A673 (cell line): ENCODE measurements at regions of chr13 and their contacts with region 1.

Region 1: DNA sequence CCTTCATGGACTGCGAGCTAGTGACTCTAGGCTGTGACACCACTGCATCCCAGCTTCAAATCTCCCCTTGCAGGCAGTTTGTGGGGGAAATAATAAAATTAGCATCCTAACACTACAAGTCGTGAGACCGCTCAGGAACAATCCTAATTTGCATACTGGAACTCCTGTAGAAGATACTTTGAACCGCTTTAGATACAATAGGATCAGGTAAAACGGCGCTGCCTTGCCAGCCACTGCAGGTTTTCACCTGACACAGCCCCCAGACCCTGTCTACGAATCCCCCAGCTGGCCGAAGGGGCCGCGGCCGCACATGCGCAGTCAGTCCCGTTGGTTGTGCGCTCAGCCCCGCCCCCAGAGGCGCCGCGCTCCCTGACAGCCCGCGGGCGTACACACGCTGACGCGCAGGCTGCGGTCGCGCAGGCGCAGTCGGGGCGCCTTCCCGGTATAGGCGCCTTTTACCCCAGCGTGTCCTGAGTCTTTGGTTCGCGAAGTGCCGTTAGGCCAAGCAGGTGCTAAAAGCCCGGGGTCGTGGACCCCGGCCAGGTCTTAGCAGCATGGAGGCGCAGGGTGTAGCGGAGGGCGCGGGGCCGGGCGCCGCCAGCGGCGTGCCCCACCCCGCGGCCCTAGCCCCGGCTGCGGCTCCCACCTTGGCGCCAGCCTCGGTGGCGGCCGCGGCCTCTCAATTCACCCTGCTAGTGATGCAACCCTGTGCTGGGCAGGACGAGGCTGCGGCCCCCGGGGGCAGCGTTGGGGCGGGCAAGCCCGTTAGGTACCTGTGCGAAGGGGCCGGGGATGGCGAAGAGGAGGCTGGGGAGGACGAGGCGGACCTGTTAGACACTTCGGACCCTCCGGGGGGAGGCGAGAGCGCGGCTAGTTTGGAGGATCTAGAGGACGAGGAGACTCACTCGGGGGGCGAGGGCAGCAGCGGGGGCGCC is at the start of gene RFXAP:
- DNase-seq: peak; percentile 94
- H3K4me3 ChIP-seq: peak within 1 kb of the TSS; percentile 79
- H3K27ac ChIP-seq: peak within 1 kb of the TSS; percentile 89
- H3K4me1 ChIP-seq: peaks cover 31% of the 10 kb centered on the region
- H3K27me3 ChIP-seq: no peaks in the 10 kb centered on the region
- CTCF ChIP-seq: no peak
- total RNA-seq, gene RFXAP: 25.9 and 29.2 TPM in 2 replicates

Region 2: GRCh38 chr13:36571444-36571843 is 247.6 kb before region 1 on chr13:
- CTCF ChIA-PET with region 1: interaction called, 4 read pairs
- POLR2A ChIA-PET with region 1: no interaction called
- intact Hi-C with region 1: loop called (anchors 10 kb)
- DNase-seq: peak; percentile 87
- H3K4me3 ChIP-seq: no peak overlapping the region
- H3K27ac ChIP-seq: peak overlapping the region; percentile 82
- H3K4me1 ChIP-seq: peaks cover 48% of the 10 kb centered on the region
- H3K27me3 ChIP-seq: no peaks in the 10 kb centered on the region
- CTCF ChIP-seq: no peak

Region 3: DNA sequence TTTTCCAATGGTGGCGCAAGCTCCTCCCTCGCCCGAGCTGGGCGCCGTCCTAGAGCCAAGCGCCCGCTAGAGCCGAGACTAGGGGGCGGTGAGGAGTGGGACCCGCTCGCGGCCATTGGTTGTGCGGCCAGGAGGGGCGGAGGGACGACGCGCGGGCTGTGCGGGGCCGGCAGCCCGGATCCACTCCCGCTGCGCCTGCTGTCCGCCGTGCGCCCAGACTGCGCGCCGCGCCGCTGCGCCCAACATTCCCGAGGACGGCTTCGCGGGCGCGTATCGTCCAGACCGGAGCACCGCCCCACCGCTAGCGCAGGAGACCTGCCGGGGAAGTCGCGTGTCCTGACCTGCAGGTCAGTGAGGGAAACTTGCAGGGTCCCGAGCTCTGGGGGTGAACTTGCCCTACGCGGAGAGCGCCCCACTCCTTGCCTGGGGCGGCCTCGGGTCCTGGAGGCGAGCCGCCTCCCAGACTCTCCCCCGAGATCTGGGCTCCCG is 145.2 kb before region 1 on chr13 and contains the start of gene SERTM1:
- CTCF ChIA-PET with region 1: no interaction called
- POLR2A ChIA-PET with region 1: no interaction called
- intact Hi-C with region 1: loop called (anchors 10 kb)
- DNase-seq: peak; percentile 93
- H3K4me3 ChIP-seq: peak within 1 kb of the TSS; percentile 66
- H3K27ac ChIP-seq: peak within 1 kb of the TSS; percentile 75
- H3K4me1 ChIP-seq: peaks cover 15% of the 10 kb centered on the region
- H3K27me3 ChIP-seq: no peaks in the 10 kb centered on the region
- CTCF ChIP-seq: no peak
- total RNA-seq, gene SERTM1: 42.9 and 53.5 TPM in 2 replicates